ENCODE measurements at regions of chr13 and their contacts with region 1.

Region 1: GRCh38 chr13:95181586-95181985 is 119.7 kb downstream of the ABCC4 start:
- DNase-seq: no peak
- H3K4me3 Mint-ChIP-seq: no peak overlapping the region
- H3K27ac Mint-ChIP-seq: peak overlapping the region; percentile 38
- H3K4me1 Mint-ChIP-seq: peaks cover 65% of the 10 kb centered on the region
- H3K27me3 Mint-ChIP-seq: no peaks in the 10 kb centered on the region

Region 2: DNA sequence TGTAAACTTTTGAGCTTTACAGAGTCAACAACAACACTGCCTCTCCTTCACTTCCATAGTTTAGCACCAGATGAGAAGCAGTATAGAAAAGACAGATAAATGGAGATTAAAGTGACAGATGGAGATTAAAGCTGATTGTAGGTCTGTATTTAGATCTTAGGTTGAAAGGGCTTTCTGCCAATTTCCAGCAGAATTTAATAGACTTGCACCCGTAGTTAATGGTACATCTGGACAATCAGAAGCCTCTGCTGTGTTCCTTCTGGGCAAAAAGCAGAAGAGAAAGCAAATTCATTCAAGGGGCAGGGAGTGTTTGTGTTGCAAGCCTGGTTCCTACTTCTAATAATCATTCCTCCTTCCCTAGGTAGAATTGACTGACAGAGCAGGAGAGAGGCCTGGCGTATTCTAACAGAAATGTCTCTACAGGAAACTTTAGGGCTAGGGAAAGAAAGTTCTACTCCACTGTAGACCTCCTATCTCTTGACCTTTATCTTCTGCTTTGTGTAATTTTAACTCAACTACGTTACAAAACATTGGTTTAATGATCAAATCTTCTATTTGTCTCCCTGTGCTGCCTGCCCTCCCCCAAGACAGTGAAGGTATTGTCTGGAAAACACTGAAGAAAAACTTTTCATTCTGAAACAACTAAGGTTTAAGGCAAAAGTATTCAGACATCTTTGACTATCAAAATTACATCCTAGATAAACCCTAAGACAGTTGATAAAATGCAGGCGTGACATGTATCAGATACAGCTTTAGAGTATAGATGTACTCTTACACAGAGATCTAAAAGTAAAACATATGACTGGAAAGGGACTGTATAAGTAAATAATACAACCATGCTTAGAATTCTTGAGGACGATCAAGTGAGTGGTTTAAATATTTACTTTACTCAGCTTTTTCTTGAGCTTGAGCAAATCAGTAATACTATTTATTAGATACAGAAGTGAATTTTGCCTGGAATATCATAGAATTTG is 1910.5 kb before region 1 on chr13:
- CTCF ChIA-PET with region 1: no interaction called
- intact Hi-C with region 1: no loop called
- DNase-seq: no peak
- H3K4me3 Mint-ChIP-seq: no peak overlapping the region
- H3K27ac Mint-ChIP-seq: no peak overlapping the region
- H3K4me1 Mint-ChIP-seq: no peaks in the 10 kb centered on the region
- H3K27me3 Mint-ChIP-seq: peaks cover 6% of the 10 kb centered on the region

Region 3: DNA sequence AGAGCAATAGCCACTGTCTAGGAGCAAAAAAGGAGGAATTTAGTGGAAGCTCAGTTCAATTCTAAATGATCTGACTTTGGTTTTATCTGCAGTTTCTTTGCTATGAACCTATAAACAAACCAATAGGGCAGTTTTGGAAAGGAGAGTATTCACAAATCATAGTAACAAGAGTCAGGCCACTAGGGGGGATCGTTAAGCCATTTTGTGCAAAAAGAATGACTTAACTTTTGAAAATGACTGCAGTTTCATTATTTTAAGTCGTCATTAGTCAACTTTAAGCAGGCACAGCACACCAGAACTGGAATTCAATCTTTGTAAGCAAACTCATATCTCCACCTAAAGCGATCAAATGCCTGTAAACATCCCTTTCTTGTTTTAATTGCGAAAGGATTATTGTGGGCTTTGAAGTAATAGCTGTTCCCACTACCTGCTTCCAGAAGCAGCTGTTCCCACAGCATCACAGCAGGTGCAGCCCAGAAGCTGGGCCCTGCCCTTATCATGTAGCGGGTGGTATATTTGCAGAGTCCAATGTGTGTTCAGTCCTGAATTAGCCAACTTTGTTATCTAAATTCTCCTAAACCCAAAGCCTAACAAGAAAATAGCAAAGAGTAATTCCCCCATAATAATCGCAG is 520.8 kb before region 1 on chr13:
- CTCF ChIA-PET with region 1: no interaction called
- intact Hi-C with region 1: loop called (anchors 2 kb)
- DNase-seq: peak; percentile 58
- H3K4me3 Mint-ChIP-seq: no peak overlapping the region
- H3K27ac Mint-ChIP-seq: no peak overlapping the region
- H3K4me1 Mint-ChIP-seq: peaks cover 37% of the 10 kb centered on the region
- H3K27me3 Mint-ChIP-seq: peaks cover 16% of the 10 kb centered on the region

Region 4: DNA sequence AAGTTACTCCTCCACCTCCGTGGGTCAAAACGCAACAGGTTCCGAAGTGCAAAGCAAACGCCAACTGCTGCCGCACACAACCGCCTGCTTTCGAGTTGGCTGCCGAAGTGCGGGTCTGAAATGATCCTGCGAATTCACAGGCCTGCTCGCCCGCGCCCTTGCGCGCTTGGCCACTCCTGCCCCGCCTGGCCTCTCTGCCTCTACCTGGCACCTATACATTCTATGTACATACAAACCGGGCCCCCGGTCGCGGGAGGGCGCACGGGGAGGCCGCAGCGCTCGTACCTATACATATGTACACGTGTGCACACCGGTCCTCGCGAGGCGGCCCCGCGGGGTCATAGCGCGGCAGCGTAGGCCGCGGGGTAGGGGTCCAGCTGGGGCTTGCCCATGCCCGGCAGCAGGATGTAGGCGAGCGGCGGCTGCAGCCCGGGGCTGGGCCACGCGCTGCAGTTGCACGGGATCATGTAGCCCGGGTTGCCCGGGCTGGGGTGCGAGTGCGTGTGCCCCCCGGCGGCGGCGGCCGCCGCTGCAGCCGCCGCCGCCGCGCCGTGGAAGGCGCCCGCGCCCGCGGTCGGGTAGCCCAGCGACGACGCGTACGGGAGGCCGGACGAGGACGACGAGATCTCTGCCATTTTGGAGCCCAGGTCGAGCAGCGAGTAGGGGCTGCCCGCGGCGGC is 470.6 kb before region 1 on chr13:
- CTCF ChIA-PET with region 1: no interaction called
- intact Hi-C with region 1: loop called (anchors 5 kb)
- DNase-seq: peak; percentile 22
- H3K4me3 Mint-ChIP-seq: peak overlapping the region; percentile 48
- H3K27ac Mint-ChIP-seq: no peak overlapping the region
- H3K4me1 Mint-ChIP-seq: peaks cover 24% of the 10 kb centered on the region
- H3K27me3 Mint-ChIP-seq: peaks cover 72% of the 10 kb centered on the region

Region 5: GRCh38 chr13:95150555-95150954 is 31.0 kb before region 1 on chr13:
- CTCF ChIA-PET with region 1: no interaction called
- intact Hi-C with region 1: loop called (anchors 1 kb)
- DNase-seq: no peak
- H3K4me3 Mint-ChIP-seq: no peak overlapping the region
- H3K27ac Mint-ChIP-seq: no peak overlapping the region
- H3K4me1 Mint-ChIP-seq: peaks cover 14% of the 10 kb centered on the region
- H3K27me3 Mint-ChIP-seq: no peaks in the 10 kb centered on the region

Region 6: DNA sequence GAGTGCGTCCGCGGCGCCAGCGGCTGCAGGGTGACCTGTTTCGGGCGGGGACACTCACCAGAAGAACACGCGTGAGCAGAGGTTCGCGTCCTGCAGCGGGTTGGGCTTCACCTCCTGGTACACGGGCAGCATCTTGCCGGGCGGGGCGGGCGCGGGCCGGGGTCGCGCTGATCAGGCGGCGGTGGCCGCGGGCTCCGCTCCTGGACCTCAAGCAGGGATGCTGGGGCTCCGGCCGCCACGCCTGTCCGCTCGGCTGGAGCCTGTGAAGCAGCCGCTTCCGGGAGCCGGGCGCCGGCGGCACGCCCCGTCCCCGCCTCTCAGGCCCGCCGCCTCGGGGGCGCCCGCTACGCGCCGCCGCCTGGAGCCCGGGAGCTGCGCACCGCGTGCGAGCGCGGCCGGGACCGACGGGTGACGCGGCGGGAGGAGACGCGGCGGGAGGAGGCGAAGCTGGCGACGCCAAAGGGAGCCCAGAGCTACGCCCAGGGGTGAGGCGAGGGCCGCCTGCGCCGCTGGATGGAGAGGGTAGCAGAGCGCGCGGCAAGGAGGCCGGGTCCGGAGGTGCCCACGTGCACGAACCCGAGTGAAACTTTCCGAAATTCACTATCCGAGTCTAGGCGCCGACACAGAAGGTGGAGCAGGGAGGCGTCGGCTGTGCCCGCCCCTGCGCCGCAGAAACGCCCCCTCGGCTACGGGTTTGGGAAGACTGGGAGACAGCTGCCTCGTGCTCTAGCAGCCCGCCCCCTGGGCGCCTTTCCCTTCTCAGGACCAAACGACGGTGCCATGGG is 119.8 kb after region 1 on chr13 and contains the start of gene ABCC4:
- CTCF ChIA-PET with region 1: interaction called, 3 read pairs
- intact Hi-C with region 1: loop called (anchors 2 kb)
- DNase-seq: peak; percentile 53
- H3K4me3 Mint-ChIP-seq: peak within 1 kb of the TSS; percentile 80
- H3K27ac Mint-ChIP-seq: peak within 1 kb of the TSS; percentile 51
- H3K4me1 Mint-ChIP-seq: peaks cover 39% of the 10 kb centered on the region
- H3K27me3 Mint-ChIP-seq: peaks cover 7% of the 10 kb centered on the region
- total RNA-seq, gene ABCC4: 8.0 to 8.1 TPM

Region 7: GRCh38 chr13:95676762-95677563 is 495.4 kb after region 1 on chr13 and contains the start of gene DNAJC3:
- CTCF ChIA-PET with region 1: no interaction called
- intact Hi-C with region 1: loop called (anchors 2 kb)
- DNase-seq: peak; percentile 98
- H3K4me3 Mint-ChIP-seq: peak within 1 kb of the TSS; percentile 93
- H3K27ac Mint-ChIP-seq: peak within 1 kb of the TSS; percentile 86
- H3K4me1 Mint-ChIP-seq: peaks cover 53% of the 10 kb centered on the region
- H3K27me3 Mint-ChIP-seq: no peaks in the 10 kb centered on the region
- total RNA-seq, gene DNAJC3: 13.8 to 14.0 TPM